ENCODE measurements at regions of chr19 and their contacts with region 1.

Region 1: DNA sequence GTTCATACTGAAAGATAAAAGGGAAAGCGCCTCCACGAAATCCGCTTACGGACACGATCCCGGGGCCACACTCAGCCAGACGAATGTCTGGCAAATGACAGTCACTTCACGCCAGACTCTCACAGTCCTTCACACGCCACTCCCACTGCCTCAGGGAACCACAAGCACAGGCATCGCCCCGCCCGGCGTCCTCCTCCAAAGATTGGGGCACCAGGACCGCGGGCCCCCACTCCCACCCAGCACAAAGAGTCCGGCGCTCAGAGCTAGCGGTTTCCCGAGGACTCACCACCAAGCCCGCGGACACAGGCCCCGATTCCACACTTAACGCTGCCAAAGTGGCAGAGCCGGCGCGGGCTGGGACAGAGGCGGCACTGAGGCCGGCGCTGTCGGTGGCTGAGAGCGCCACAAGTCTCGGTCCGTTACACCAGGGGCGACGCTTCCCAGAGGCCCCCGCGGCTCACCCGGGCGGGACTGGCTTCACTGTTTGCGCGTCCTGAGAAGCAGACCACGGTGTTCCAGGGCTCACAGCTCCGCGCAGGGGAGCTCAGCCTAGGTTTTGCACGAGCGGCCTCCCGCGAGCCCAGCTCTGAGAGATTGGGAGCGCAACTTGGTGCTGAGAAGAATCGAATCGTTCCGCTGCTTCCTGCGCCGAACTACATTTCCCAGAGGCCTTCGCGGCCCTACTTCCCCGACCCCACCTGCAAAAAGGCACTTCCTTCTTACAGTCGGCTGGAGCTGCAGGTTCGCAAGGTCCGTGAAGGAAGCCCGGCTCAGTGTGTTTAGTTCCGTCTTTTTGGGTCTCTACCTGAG is at the start of gene ZNF569:
- DNase-seq: peak; percentile 93
- H3K4me3 Mint-ChIP-seq: peak within 1 kb of the TSS; percentile 92
- H3K27ac Mint-ChIP-seq: peak within 1 kb of the TSS; percentile 94
- H3K4me1 Mint-ChIP-seq: peaks cover 29% of the 10 kb centered on the region
- H3K27me3 Mint-ChIP-seq: no peaks in the 10 kb centered on the region
- total RNA-seq, gene ZNF569: 5.3 to 7.2 TPM

Region 2: GRCh38 chr19:36687214-36688056 is 779.6 kb before region 1 on chr19 and contains the start of gene ZNF567:
- CTCF ChIA-PET with region 1: no interaction called
- POLR2A ChIA-PET with region 1: no interaction called
- intact Hi-C with region 1: loop called (anchors 10 kb)
- DNase-seq: peak; percentile 99
- H3K4me3 Mint-ChIP-seq: peak within 1 kb of the TSS; percentile 99
- H3K27ac Mint-ChIP-seq: peak within 1 kb of the TSS; percentile 90
- H3K4me1 Mint-ChIP-seq: peaks cover 24% of the 10 kb centered on the region
- H3K27me3 Mint-ChIP-seq: no peaks in the 10 kb centered on the region
- total RNA-seq, gene ZNF567: 4.9 to 5.3 TPM

Region 3: DNA sequence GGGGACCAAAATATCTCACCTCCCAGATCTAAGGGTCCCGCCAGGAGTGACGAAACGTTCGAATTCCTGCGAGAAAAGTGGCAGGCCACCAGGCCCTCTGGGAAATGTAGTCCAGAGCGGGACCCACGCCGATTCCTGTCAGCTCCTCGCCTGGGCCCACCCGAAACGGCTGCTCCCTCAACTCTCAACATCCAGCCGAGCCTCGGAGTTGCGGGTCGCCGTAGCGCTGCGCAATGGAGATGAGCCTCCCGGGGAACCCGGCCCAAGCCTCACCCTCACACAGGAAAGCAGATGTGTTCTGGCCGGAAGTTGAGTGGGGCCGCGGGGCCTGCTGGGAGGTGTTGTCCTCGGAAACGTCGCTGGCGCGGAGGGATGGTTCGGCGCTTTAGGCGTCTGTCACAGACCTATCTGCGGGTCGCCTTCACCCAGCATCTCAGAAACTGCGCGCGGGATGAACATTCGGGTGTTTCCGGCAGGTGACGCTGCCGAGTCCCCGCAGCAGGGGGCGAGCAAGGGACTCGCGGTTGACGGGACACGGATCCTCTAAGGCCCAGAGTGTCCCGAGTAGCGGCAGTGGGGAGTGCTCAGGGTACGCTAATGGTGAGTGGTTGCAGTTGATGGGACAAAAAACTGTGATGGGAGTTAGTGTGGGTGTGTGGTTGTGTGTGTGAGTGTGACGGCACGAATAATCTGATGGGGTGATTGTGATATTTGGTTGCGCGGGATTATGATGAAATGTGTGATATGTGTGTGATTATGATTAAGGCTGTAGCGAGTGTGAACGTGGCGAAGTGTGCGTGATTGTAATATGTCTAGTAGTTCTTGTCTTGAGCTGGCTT is 550.8 kb before region 1 on chr19 and contains the starts of genes ZNF568 and ZNF829:
- CTCF ChIA-PET with region 1: no interaction called
- POLR2A ChIA-PET with region 1: no interaction called
- intact Hi-C with region 1: loop called (anchors 1 kb)
- DNase-seq: peak; percentile 96
- H3K4me3 Mint-ChIP-seq: peak within 1 kb of the TSS; percentile 92
- H3K27ac Mint-ChIP-seq: peak within 1 kb of the TSS; percentile 94
- H3K4me1 Mint-ChIP-seq: peaks cover 29% of the 10 kb centered on the region
- H3K27me3 Mint-ChIP-seq: no peaks in the 10 kb centered on the region
- total RNA-seq, gene ZNF568: 4.8 to 6.3 TPM
- total RNA-seq, gene ZNF829: 3.8 to 4.3 TPM

Region 4: GRCh38 chr19:37217855-37218591 is 249.0 kb before region 1 on chr19 and contains the start of gene ZNF383:
- CTCF ChIA-PET with region 1: no interaction called
- POLR2A ChIA-PET with region 1: no interaction called
- intact Hi-C with region 1: loop called (anchors 1 kb)
- DNase-seq: peak; percentile 90
- H3K4me3 Mint-ChIP-seq: peak within 1 kb of the TSS; percentile 99
- H3K27ac Mint-ChIP-seq: peak within 1 kb of the TSS; percentile 99
- H3K4me1 Mint-ChIP-seq: peaks cover 19% of the 10 kb centered on the region
- H3K27me3 Mint-ChIP-seq: no peaks in the 10 kb centered on the region
- total RNA-seq, gene ZNF383: 7.7 TPM

Region 5: DNA sequence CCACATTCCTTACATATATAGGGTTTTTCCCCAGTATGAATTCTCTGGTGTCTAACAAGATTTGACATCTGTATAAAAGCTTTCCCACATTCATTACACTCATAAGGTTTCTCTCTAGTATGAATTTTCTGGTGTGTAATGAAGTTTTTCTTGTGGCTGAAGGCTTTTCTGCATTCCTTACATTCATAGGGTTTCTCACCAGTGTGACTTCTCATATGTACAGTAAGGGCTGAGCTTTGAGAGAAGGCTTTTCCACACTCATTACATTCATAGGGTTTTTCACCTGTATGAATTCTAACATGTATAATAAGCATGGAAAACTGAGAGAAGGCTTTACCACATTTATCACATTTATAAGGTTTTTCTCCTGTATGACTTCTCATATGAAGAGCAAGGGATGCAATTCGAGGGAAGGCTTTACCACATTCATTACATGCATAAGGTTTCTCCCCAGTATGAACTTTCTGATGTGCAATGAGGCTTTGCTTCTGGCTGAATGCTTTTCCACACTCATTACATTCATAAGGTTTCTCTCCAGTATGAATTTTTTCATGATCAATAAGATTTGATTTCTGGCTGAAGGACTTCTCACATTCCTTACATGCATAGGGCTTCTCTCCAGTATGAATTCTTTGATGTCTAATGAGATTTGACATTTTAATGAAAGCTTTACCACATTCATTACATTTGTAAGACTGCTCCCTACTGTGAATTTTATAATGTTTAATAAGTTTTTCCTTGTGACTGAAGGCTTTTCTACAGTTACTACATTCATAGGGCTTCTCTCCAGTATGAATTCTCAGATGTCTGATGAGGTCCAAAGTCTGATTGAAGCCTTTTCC is 53.5 kb before region 1 on chr19:
- CTCF ChIA-PET with region 1: no interaction called
- POLR2A ChIA-PET with region 1: no interaction called
- intact Hi-C with region 1: no loop called
- DNase-seq: no peak
- H3K4me3 Mint-ChIP-seq: no peak overlapping the region
- H3K27ac Mint-ChIP-seq: no peak overlapping the region
- H3K4me1 Mint-ChIP-seq: no peaks in the 10 kb centered on the region
- H3K27me3 Mint-ChIP-seq: no peaks in the 10 kb centered on the region

Region 6: GRCh38 chr19:37594304-37594981 is 127.4 kb after region 1 on chr19 and contains the starts of genes ZNF540 and ZNF571:
- CTCF ChIA-PET with region 1: interaction called, 3 read pairs
- POLR2A ChIA-PET with region 1: interaction called, 6 read pairs
- intact Hi-C with region 1: loop called (anchors 1 kb)
- DNase-seq: peak; percentile 96
- H3K4me3 Mint-ChIP-seq: peak within 1 kb of the TSS; percentile 86
- H3K27ac Mint-ChIP-seq: peak within 1 kb of the TSS; percentile 100
- H3K4me1 Mint-ChIP-seq: peaks cover 31% of the 10 kb centered on the region
- H3K27me3 Mint-ChIP-seq: no peaks in the 10 kb centered on the region
- total RNA-seq, gene ZNF540: 0.86 to 1.1 TPM
- total RNA-seq, gene ZNF571: 2.7 to 4.0 TPM

Region 7: GRCh38 chr19:37779127-37780005 is 312.4 kb after region 1 on chr19 and contains the start of gene ZNF573:
- CTCF ChIA-PET with region 1: no interaction called
- POLR2A ChIA-PET with region 1: no interaction called
- intact Hi-C with region 1: loop called (anchors 2 kb)
- DNase-seq: peak; percentile 89
- H3K4me3 Mint-ChIP-seq: peak within 1 kb of the TSS; percentile 93
- H3K27ac Mint-ChIP-seq: peak within 1 kb of the TSS; percentile 97
- H3K4me1 Mint-ChIP-seq: peaks cover 31% of the 10 kb centered on the region
- H3K27me3 Mint-ChIP-seq: no peaks in the 10 kb centered on the region
- total RNA-seq, gene ZNF573: 7.7 to 7.8 TPM